ENCODE measurements at regions of chr20 and their contacts with region 1.

Region 1: DNA sequence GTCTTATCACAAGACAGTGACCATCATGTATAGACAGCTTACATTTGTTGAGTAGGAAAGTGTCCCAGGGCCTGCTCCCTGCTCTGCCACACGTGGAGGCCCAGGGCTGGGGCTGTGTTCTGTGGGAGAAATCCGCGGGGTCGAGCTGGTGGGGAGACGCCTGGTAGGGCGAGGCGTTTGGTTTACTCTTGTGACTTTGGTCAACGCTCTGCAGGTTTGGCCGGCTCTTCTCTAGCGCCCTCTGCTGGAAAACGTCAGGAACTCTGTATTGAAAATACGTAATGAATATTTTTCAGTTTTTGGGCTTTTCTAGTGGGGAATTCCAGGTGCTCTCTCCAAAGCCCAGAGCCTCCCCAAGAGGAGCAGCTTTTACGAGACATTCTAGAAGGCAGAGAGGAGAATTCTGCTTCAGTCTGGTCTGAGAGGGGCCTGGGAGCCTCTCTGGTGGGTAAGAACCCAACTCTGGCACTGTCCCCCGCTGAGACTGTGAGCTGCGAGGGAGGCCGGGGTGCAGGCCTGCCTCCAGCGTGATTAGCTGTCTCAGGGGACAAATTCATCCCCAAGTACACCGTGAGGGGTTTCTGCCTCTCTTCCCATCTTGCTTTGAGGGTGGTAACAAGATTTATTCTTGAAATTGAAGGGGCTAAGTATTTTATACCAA is 112.6 kb upstream of the RALGAPA2 start:
- DNase-seq: peak; percentile 38 to 42
- ATAC-seq: peak; percentile 69 to 78
- H3K4me3 ChIP-seq: peak overlapping the region in 3 of 4 donors; percentile 8 to 23 (median 13)
- H3K27ac ChIP-seq: peak overlapping the region in 3 of 4 donors; percentile 15 to 46 (median 24)
- H3K4me1 ChIP-seq: peaks cover 11 to 19% of the 10 kb centered on the region in 2 donors
- H3K27me3 ChIP-seq: no peaks in the 10 kb centered on the region
- CTCF ChIP-seq: peak; percentile 79 to 93 (median 90)
- POLR2A ChIP-seq: no peak

Region 2: GRCh38 chr20:20593447-20594170 is 231.4 kb before region 1 on chr20:
- in situ Hi-C with region 1: loop called in 1 of 4 experiments (anchors 10 kb)
- intact Hi-C with region 1: no loop called
- DNase-seq: no peak
- ATAC-seq: peak in 1 of 2 donors; percentile 55
- H3K4me3 ChIP-seq: no peak overlapping the region
- H3K27ac ChIP-seq: peak overlapping the region in 1 of 4 donors; percentile 11
- H3K4me1 ChIP-seq: no peaks in the 10 kb centered on the region
- H3K27me3 ChIP-seq: no peaks in the 10 kb centered on the region
- CTCF ChIP-seq: peak in 2 of 5 experiments; percentile 29 to 36
- POLR2A ChIP-seq: no peak

Region 3: GRCh38 chr20:20664795-20665589 is 160.1 kb before region 1 on chr20:
- in situ Hi-C with region 1: loop called (anchors 5 kb)
- intact Hi-C with region 1: loop called (anchors 1 kb)
- DNase-seq: no peak
- ATAC-seq: peak; percentile 90
- H3K4me3 ChIP-seq: no peak overlapping the region
- H3K27ac ChIP-seq: peak overlapping the region; percentile 48 to 70 (median 66)
- H3K4me1 ChIP-seq: peaks cover 43 to 47% of the 10 kb centered on the region in 2 donors
- H3K27me3 ChIP-seq: no peaks in the 10 kb centered on the region
- CTCF ChIP-seq: peak; percentile 37 to 78 (median 61)
- POLR2A ChIP-seq: no peak